GM12878 (cell line): ENCODE measurements at regions of chr2 and their contacts with region 1.

Region 1: GRCh38 chr2:164717000-164717803 is 95.9 kb upstream of the GRB14 start:
- DNase-seq: no peak
- ATAC-seq: no peak
- H3K4me3 ChIP-seq: no peak overlapping the region
- H3K27ac ChIP-seq: no peak overlapping the region
- H3K4me1 ChIP-seq: no peaks in the 10 kb centered on the region
- H3K27me3 ChIP-seq: no peaks in the 10 kb centered on the region; a peak in 1 of 4 replicates
- CTCF ChIP-seq: peak; percentile 19 to 45 (median 44); a peak in 3 of 6 replicates
- EP300 ChIP-seq: no peak
- POLR2A ChIP-seq: no peak
- RAD21 ChIP-seq: peak; percentile 25; the same call in 1 of the 2 replicates

Region 2: GRCh38 chr2:164560181-164560792 is 156.9 kb before region 1 on chr2:
- CTCF ChIA-PET with region 1: interaction called, 11 read pairs
- POLR2A ChIA-PET with region 1: no interaction called
- RAD21 ChIA-PET with region 1: no interaction called
- SMC1A ChIA-PET with region 1: interaction called, 5 read pairs
- in situ Hi-C with region 1: no loop called
- intact Hi-C with region 1: loop called (anchors 2 kb)
- DNase-seq: no peak
- ATAC-seq: 0 out of 3 replicates have a peak, but pooled peaks have one; percentile 40
- H3K4me3 ChIP-seq: no peak overlapping the region
- H3K27ac ChIP-seq: no peak overlapping the region
- H3K4me1 ChIP-seq: no peaks in the 10 kb centered on the region
- H3K27me3 ChIP-seq: no peaks in the 10 kb centered on the region
- CTCF ChIP-seq: peak; percentile 45 to 59 (median 48); a peak in 5 of 6 replicates
- EP300 ChIP-seq: no peak
- POLR2A ChIP-seq: no peak
- RAD21 ChIP-seq: peak; percentile 43

Region 3: GRCh38 chr2:164565359-164565758 is 151.8 kb before region 1 on chr2:
- CTCF ChIA-PET with region 1: interaction called, 11 read pairs
- POLR2A ChIA-PET with region 1: no interaction called
- RAD21 ChIA-PET with region 1: no interaction called
- SMC1A ChIA-PET with region 1: interaction called, 5 read pairs
- in situ Hi-C with region 1: no loop called
- intact Hi-C with region 1: loop called (anchors 2 kb)
- DNase-seq: no peak
- ATAC-seq: no peak
- H3K4me3 ChIP-seq: no peak overlapping the region
- H3K27ac ChIP-seq: no peak overlapping the region
- H3K4me1 ChIP-seq: no peaks in the 10 kb centered on the region
- H3K27me3 ChIP-seq: no peaks in the 10 kb centered on the region
- CTCF ChIP-seq: no peak
- EP300 ChIP-seq: no peak
- POLR2A ChIP-seq: no peak
- RAD21 ChIP-seq: no peak

Region 4: DNA sequence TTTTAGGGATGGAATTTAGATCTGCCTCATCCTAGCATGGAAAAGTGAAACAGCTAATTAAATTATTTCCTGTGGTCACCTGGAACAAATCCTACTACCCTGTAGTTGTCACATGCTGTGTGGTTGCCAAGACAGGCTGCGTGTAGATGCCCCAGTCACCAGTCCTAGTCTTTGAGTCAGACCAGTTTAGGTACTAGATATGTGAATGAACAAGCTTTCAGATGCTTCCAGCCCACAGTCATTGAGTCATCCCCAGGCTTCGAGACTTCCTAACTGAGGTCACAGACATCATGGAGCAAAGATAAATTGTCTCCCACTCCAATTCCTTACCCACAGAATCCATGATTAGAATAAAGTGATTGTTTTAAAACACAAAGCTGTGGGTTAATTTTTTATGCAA is 60.1 kb before region 1 on chr2:
- CTCF ChIA-PET with region 1: no interaction called
- POLR2A ChIA-PET with region 1: no interaction called
- RAD21 ChIA-PET with region 1: no interaction called
- SMC1A ChIA-PET with region 1: no interaction called
- in situ Hi-C with region 1: no loop called
- intact Hi-C with region 1: no loop called
- DNase-seq: no peak
- ATAC-seq: no peak
- H3K4me3 ChIP-seq: no peak overlapping the region
- H3K27ac ChIP-seq: no peak overlapping the region
- H3K4me1 ChIP-seq: no peaks in the 10 kb centered on the region
- H3K27me3 ChIP-seq: no peaks in the 10 kb centered on the region
- CTCF ChIP-seq: no peak
- EP300 ChIP-seq: no peak
- POLR2A ChIP-seq: no peak
- RAD21 ChIP-seq: no peak